B cell (primary cell): ENCODE measurements at regions of chr21 and their contacts with region 1.

Region 1: DNA sequence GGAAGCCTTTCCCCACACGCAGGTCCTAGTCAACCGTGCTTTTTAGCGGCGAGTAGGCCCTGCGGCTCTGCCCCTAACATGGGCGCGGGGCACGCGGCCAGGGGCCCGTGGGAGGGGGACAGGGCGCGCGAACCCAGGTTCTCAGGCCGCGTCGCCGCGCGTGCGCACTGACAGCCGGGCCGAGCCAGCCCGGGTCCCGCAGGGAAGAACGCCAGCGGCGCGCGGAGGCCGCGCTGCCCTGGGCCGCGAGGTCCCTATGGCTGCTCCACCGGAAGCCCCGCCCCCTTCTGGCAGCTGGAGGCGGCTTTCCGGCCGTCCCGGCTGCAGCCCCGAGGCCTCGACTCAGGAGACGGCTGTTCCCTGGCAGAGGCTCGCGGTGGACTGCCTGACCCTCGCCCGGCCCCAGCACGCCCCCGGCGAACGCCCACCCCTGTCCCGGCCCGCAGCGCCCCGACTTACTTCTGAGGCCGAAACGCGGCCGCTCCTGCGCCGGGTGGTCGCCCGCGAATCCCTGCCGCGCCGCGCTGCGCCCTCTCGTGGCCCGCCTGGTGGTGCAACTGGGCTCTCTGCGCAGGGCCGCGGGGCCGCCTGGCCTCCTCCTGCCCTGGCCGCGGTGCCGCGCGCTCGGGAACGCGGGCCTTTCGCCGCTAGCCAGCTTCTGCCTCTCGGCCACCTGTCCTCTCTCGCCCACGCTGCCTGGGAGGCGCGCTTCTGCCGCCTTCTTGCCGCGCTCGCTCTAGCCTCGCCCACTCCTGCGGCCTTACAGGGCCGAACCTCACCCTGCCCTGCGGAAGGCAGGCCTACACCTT is 16.6 kb upstream of the RIPPLY3 start:
- DNase-seq: peak; percentile 93
- ATAC-seq: peak; percentile 93
- H3K4me3 ChIP-seq: peak overlapping the region in 4 of 5 experiments; percentile 39 to 65 (median 60)
- H3K4me3 Mint-ChIP-seq: peak overlapping the region; percentile 89
- H3K27ac ChIP-seq: peak overlapping the region; percentile 55 to 78
- H3K27ac Mint-ChIP-seq: peak overlapping the region; percentile 93
- H3K4me1 ChIP-seq: peaks cover 0 to 14% of the 10 kb centered on the region in 2 donors
- H3K4me1 Mint-ChIP-seq: peaks cover 9% of the 10 kb centered on the region
- H3K27me3 ChIP-seq: no peaks in the 10 kb centered on the region
- H3K27me3 Mint-ChIP-seq: no peaks in the 10 kb centered on the region
- CTCF ChIP-seq: peak; percentile 92

Region 2: DNA sequence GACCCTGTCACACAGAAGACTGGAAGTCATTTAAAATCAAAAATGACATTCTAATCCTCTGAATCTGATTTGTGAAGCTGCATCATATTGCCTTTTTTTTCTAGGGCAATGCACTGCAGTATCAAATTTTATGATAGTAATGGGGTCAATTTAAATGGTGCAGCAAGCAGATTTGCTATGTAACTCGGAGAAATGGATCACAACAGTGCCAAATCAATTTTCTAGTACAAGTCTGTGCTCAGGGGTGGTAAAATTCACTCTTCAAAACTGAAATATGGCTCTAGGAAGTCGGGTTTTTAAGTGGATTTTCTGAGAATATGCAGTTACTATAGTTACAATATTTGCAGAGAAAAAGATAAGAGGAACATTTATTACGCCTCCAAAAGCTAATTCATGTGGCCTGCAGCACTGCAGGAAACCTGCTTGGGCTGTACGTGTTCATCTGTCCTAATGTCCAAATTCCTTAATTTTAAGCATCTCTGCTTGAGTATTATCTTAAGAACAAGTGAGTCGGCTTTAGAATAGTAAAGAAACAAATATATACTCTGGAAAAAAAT is 55.0 kb before region 1 on chr21:
- CTCF ChIA-PET with region 1: interaction called, 4 read pairs
- POLR2A ChIA-PET with region 1: no interaction called
- intact Hi-C with region 1: loop called (anchors 1 kb)
- DNase-seq: no peak
- ATAC-seq: no peak
- H3K4me3 ChIP-seq: no peak overlapping the region
- H3K4me3 Mint-ChIP-seq: no peak overlapping the region
- H3K27ac ChIP-seq: no peak overlapping the region
- H3K27ac Mint-ChIP-seq: no peak overlapping the region
- H3K4me1 ChIP-seq: no peaks in the 10 kb centered on the region
- H3K4me1 Mint-ChIP-seq: no peaks in the 10 kb centered on the region
- H3K27me3 ChIP-seq: no peaks in the 10 kb centered on the region
- H3K27me3 Mint-ChIP-seq: no peaks in the 10 kb centered on the region
- CTCF ChIP-seq: no peak

Region 3: GRCh38 chr21:36966066-36966820 is 23.7 kb before region 1 on chr21 and contains the start of gene HLCS:
- CTCF ChIA-PET with region 1: interaction called, 23 read pairs
- POLR2A ChIA-PET with region 1: interaction called, 14 read pairs
- intact Hi-C with region 1: loop called (anchors 1 kb)
- DNase-seq: peak; percentile 87
- ATAC-seq: peak; percentile 90
- H3K4me3 ChIP-seq: peak within 1 kb of the TSS in 4 of 5 experiments; percentile 43 to 73 (median 69)
- H3K4me3 Mint-ChIP-seq: peak within 1 kb of the TSS; percentile 92
- H3K27ac ChIP-seq: peak within 1 kb of the TSS; percentile 39 to 81
- H3K27ac Mint-ChIP-seq: peak within 1 kb of the TSS; percentile 89
- H3K4me1 ChIP-seq: peaks cover 13 to 16% of the 10 kb centered on the region in 2 donors
- H3K4me1 Mint-ChIP-seq: peaks cover 15% of the 10 kb centered on the region
- H3K27me3 ChIP-seq: no peaks in the 10 kb centered on the region
- H3K27me3 Mint-ChIP-seq: no peaks in the 10 kb centered on the region
- CTCF ChIP-seq: peak; percentile 22
- total RNA-seq, gene HLCS: 14.7 and 16.2 TPM in 2 replicates

Region 4: GRCh38 chr21:36976882-36977651 is 12.8 kb before region 1 on chr21:
- CTCF ChIA-PET with region 1: interaction called, 51 read pairs
- POLR2A ChIA-PET with region 1: interaction called, 10 read pairs
- intact Hi-C with region 1: loop called (anchors 1 kb)
- DNase-seq: peak; percentile 76
- ATAC-seq: peak; percentile 88
- H3K4me3 ChIP-seq: no peak overlapping the region
- H3K4me3 Mint-ChIP-seq: peak overlapping the region; percentile 47
- H3K27ac ChIP-seq: no peak overlapping the region
- H3K27ac Mint-ChIP-seq: peak overlapping the region; percentile 77
- H3K4me1 ChIP-seq: peaks cover 16 to 22% of the 10 kb centered on the region in 2 donors
- H3K4me1 Mint-ChIP-seq: peaks cover 24% of the 10 kb centered on the region
- H3K27me3 ChIP-seq: peaks cover 0 to 13% (median 5%) of the 10 kb centered on the region in 4 experiments
- H3K27me3 Mint-ChIP-seq: peaks cover 3% of the 10 kb centered on the region
- CTCF ChIP-seq: peak; percentile 72

Region 5: GRCh38 chr21:37000381-37000780 is 10.5 kb after region 1 on chr21:
- CTCF ChIA-PET with region 1: interaction called, 16 read pairs
- POLR2A ChIA-PET with region 1: interaction called, 4 read pairs
- intact Hi-C with region 1: no loop called
- DNase-seq: no peak
- ATAC-seq: no peak
- H3K4me3 ChIP-seq: no peak overlapping the region
- H3K4me3 Mint-ChIP-seq: no peak overlapping the region
- H3K27ac ChIP-seq: no peak overlapping the region
- H3K27ac Mint-ChIP-seq: no peak overlapping the region
- H3K4me1 ChIP-seq: peaks cover 0 to 3% of the 10 kb centered on the region in 2 donors
- H3K4me1 Mint-ChIP-seq: no peaks in the 10 kb centered on the region
- H3K27me3 ChIP-seq: peaks cover 0 to under 1% (median 0%) of the 10 kb centered on the region in 4 experiments
- H3K27me3 Mint-ChIP-seq: no peaks in the 10 kb centered on the region
- CTCF ChIP-seq: no peak

Region 6: DNA sequence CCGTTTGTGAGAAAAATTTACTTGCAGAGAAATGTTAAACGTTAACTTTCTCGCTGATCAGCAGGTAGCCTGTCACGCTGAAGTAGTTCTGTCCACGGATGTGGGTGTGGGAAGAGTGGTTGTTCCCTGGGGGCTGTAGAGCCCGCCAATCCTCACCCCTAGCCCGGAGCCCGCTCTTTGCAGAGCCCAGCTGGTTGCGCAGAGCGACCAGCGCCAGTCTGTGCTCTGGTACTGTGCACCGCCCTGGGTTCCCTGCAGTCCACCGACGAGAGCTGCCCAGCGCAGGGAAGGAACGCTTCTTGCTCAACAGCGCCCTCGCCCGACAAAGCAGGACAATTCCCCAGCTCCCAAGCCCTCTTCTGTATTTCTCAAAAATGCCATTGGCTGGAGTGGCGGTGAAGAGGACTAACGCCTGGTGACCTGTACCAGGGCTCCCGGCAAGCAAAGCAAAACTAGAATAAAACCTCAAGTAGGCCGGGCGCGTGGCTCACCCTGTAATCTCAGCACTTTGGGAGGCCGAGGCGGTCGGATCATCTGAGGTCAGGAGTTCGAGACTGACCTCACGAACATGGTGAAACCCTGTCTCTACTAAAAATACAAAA is 19.9 kb after region 1 on chr21:
- CTCF ChIA-PET with region 1: interaction called, 18 read pairs
- POLR2A ChIA-PET with region 1: interaction called, 4 read pairs
- intact Hi-C with region 1: no loop called
- DNase-seq: peak; percentile 76
- ATAC-seq: peak; percentile 90
- H3K4me3 ChIP-seq: peak overlapping the region in 4 of 5 experiments; percentile 2 to 54 (median 27)
- H3K4me3 Mint-ChIP-seq: peak overlapping the region; percentile 64
- H3K27ac ChIP-seq: no peak overlapping the region
- H3K27ac Mint-ChIP-seq: no peak overlapping the region
- H3K4me1 ChIP-seq: peaks cover 27 to 33% of the 10 kb centered on the region in 2 donors
- H3K4me1 Mint-ChIP-seq: peaks cover 18% of the 10 kb centered on the region
- H3K27me3 ChIP-seq: peaks cover 0 to 58% (median 26%) of the 10 kb centered on the region in 4 experiments
- H3K27me3 Mint-ChIP-seq: peaks cover 55% of the 10 kb centered on the region
- CTCF ChIP-seq: peak; percentile 81

Region 7: DNA sequence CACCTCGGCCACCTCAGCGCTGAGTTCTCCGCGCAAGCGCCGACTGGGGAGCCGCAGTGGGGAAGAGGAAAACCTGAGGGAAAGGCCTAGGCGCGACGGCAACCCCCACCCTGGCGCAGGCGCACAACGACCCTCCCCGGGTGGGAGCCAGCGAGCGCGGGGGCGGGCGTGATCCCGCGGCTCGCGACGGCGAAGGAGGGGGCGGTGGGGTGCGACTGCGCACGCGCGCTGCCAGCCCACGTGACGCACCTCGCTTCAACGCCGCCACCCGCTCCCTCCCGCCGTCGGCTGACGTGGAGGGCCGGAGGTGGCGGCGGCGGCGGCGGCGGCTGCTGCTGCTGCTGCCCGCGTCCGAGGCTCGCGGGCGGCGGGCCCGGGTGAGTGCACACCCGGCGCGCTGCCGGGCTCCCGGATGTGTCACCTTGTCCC is 83.1 kb after region 1 on chr21 and contains the starts of genes PIGP and TTC3:
- CTCF ChIA-PET with region 1: no interaction called
- POLR2A ChIA-PET with region 1: interaction called, 5 read pairs
- intact Hi-C with region 1: loop called (anchors 1 kb)
- DNase-seq: peak; percentile 98
- ATAC-seq: peak; percentile 67
- H3K4me3 ChIP-seq: peak within 1 kb of the TSS; percentile 80 to 92 (median 86)
- H3K4me3 Mint-ChIP-seq: peak within 1 kb of the TSS; percentile 98
- H3K27ac ChIP-seq: peak within 1 kb of the TSS; percentile 98
- H3K27ac Mint-ChIP-seq: peak within 1 kb of the TSS; percentile 99
- H3K4me1 ChIP-seq: peaks cover 22 to 23% of the 10 kb centered on the region in 2 donors
- H3K4me1 Mint-ChIP-seq: peaks cover 46% of the 10 kb centered on the region
- H3K27me3 ChIP-seq: no peaks in the 10 kb centered on the region
- H3K27me3 Mint-ChIP-seq: no peaks in the 10 kb centered on the region
- CTCF ChIP-seq: no peak
- total RNA-seq, gene PIGP: 21.7 and 22.7 TPM in 2 replicates
- total RNA-seq, gene TTC3: 163 and 191 TPM in 2 replicates